ENCODE measurements at regions of chr6 and their contacts with region 1.

Region 1: GRCh38 chr6:36765594-36766398 is 68.2 kb downstream of the RAB44 start:
- DNase-seq: peak; percentile 94

Region 2: DNA sequence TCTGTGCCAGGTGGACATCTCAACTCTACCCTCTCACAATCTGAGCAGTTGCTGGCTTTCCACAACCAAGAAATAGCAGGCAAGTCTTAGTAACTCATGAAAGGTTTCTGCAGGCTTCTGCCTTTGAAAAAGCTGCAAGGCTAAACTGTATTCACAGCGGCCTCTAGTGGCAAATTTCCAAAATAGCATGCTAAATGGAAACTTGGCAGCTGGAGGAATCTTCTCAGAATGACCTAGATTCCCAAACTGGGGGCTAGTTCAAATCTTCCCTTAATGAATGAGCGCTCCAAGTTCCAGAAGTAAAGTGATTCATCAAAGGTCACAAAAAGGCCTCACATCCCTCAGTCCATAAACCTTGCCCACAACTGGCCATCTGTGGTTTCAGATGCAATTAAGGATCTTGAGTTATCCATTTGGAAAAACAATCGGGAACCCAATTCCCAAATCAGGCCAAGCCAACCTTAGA is 85.4 kb after region 1 on chr6:
- intact Hi-C with region 1: loop called (anchors 2 kb)
- DNase-seq: no peak

Region 3: GRCh38 chr6:36979347-36979742 is 213.5 kb after region 1 on chr6:
- intact Hi-C with region 1: loop called (anchors 5 kb)
- DNase-seq: no peak

Region 4: DNA sequence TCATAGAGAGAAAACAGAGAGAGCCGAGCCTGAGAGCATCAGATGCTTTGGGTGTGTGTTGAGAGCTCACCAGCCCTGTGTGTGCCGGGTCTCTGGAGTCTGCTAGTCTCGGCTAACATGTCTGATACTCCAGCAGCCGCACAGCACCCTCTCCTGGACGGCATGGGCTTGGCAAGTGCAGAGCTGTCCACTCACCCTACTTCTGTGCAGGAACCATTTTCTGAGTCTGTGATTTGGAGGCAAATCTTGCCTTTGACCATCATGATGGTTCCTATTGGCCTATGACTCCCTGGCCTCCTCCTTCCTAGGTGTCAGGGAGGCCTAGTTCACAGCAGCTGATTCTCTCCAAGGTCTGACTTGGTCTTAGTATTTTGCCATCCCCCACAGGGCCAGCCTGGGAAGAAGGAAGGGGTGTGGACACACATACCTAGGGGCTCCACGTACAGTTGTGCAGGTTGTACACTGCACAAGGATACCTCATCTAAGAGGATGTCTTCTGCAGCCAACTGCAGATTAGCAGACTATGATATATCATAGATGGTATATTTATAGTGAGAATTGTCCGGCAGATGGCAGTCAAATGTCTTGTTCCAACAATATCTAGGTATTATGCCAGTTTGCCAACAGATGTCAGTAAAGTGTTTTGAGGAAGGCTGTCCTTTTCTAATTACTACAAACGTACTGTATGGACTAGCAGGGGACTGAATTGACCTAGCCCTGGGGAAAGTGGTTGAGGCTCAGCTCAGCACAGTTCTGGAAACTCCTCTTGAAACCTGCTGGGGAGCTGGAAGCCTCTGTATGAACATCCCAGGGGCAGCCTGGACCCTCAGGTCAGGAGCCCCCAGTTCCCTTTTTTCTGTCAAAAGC is 252.6 kb after region 1 on chr6:
- intact Hi-C with region 1: loop called (anchors 5 kb)
- DNase-seq: peak; percentile 94

Region 5: GRCh38 chr6:37207903-37208456 is 442.2 kb after region 1 on chr6:
- intact Hi-C with region 1: loop called (anchors 10 kb)
- DNase-seq: peak; percentile 94

Region 6: DNA sequence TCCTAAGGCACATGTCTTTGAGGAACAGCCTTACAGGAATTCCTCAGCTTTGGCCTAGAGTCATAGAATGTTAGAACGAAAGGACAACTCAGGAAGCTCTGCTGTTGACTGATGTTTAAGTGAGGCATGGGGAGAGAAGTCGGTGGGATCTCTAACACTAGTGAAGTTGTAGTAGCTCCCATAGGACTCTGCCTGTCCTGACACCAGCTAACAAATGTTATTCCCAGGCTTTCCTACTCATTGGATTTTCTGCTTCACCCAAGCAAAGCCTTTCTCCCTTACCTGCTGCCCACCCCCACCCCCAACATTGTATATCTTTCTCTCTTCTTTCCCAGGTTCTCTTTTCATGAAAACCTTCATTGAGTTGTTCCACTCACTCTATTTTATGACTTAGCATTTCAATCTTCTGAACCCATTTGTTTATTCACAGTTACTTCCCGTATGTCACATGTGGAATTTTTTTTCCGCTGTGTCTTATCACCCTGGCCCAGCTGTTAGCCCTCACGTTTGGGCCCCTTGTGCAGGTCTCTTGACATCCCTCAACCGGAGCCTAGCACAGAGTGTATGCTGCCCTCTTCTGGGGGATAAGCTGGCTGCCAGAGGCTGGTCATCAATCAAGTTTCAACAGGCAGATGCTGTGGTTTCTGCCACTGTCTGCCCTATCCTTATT is 548.8 kb after region 1 on chr6:
- intact Hi-C with region 1: no loop called
- DNase-seq: no peak

Measured in cardiac septum (tissue), 1 donor.